ENCODE measurements at regions of chr11 and their contacts with region 1.

Region 1: DNA sequence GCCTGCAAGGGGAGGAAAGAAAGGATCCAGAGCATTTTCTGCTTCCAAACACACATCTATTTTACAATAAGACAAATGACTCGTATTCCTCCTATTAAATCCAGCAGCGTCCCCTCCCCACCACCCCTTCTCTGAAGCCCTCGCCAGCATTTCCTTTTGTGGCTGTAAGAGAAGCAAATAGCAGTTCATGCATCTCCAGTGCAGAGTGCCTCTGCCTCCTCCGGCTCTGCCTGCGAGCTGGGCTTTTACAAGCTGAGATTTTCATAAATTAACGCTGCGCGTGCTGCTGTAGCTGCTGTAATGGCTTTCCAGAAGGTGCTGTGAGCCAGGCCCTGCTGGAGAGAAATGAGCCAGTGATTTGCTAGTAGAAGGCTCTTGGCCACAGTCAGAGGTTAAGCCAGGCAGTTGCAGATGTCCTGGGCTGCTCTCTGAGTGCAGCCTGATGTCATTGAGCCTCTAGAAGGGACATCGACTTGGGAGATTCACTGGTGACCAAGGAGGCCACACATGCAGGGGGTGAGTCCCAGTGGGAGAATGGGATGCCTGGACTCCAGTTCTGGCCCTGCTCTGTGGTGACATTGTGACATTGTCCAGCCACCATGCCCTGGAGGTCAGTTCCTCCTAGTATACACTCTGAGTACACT is 134.5 kb upstream of the NAV2 start:
- DNase-seq: no peak
- ATAC-seq: peak; percentile 81

Region 2: DNA sequence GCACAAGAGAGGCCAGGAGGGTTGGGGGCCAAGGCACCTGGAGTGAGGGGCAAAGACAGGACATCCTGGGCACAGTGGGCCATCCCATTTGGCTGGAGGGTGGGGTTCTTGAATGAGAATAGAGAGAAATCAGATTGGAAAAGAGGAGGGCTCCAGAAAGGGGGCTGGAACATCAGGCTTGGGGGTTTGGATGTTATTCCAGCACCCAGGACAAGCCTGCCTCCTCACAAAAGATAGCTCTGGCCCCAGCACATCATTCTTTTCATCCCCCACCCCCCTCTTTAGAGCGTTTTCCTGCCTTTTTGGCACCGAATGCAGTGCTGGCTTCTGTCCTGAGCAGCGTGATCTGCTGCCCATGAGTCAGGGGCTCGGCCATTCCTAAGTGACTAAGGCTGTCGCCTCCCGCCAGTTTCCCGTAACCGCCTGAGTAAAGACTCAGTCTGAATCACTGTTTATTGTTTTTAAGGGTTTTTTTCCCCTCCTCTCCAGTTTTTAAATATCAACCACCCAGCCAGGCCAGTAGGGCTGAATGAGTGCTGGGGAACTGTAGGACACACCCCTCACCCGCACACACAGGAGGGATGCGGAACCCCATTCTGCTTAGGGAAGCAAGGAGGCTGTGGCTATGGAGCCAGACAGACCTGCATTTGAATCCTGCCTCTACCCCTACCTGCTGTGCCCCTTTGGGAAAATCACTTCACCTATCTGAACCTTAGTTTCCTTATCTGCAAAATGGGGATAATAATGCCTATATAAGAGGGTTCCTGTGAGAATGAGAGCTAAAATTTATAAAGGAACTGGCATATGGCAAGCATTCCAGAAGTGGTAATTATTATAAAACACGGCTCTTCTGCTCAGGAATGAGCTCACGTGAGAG is 102.1 kb after region 1 on chr11:
- intact Hi-C with region 1: loop called (anchors 5 kb)
- DNase-seq: peak; percentile 86
- ATAC-seq: peak; percentile 59

Region 3: GRCh38 chr11:19698493-19699292 is 120.6 kb after region 1 on chr11:
- intact Hi-C with region 1: loop called (anchors 1 kb)
- DNase-seq: no peak
- ATAC-seq: peak; percentile 91

Region 4: DNA sequence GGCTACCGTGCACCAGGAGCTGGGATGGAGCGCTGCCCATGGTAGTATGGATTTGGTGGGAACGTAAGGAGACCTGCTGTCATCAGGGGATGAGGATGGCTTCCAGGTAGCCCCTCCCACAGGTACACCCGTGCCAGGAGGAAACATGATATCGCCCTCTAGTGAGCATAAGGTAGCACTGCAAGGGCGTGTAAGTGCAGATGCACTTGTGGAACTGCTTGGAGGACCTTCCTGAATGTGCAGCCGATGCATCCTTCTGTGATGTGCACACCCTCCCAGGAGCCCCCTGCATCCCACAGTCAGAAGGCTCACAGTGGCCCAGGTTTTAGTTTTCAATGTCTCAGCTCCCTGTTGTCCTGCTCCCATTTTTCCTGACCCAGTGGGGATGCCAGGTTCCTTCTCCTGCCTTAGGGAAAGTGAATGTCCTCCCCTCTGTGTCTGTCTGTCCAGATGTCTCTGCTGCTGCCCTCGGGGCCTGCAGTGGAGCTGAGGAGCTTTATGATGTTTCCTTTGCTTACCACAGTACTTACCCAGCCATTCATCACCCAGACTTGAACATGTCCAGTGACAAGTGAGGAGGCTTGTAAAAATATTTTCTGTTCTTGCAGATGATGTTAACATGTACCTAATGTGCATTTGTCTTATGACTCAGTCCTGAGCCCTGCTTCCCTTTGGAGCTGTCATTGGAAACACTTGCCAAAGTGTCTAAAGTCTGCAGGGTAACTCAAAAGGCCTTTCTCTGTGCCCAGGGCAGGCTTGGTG is 533.0 kb after region 1 on chr11:
- intact Hi-C with region 1: loop called (anchors 10 kb)
- DNase-seq: no peak
- ATAC-seq: peak; percentile 42

Measured in Right ventricle myocardium inferior (tissue), 1 donor.